Left ventricle myocardium superior (tissue), 1 donor: ENCODE measurements at regions of chr5 and their contacts with region 1.

Region 1: DNA sequence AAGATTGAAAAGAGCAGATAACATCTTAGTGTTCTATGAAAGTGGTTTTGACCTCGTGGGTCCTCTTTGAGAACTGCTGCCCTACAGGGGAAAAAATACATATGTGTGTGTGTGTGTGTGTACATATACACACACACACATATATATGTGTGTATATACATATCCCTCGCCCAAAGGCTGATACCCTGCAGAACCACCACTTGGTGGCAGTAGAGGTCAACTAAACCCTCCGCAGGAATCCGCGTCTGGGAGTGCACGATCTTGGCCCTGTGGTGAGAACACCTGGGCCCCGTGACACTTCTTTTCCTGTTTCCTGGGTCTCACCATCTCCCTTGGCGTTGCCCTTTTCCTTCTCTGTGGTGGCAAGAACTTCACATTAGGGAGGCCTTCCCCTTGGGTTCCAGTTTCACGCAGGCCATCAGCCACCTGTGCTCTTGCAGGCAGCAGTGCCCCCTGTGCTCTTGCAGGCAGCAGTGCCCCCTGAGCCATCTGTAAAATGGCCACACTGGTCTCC is 8.2 kb downstream of the IL9 start:
- DNase-seq: peak; percentile 41
- ATAC-seq: peak; percentile 87

Region 2: DNA sequence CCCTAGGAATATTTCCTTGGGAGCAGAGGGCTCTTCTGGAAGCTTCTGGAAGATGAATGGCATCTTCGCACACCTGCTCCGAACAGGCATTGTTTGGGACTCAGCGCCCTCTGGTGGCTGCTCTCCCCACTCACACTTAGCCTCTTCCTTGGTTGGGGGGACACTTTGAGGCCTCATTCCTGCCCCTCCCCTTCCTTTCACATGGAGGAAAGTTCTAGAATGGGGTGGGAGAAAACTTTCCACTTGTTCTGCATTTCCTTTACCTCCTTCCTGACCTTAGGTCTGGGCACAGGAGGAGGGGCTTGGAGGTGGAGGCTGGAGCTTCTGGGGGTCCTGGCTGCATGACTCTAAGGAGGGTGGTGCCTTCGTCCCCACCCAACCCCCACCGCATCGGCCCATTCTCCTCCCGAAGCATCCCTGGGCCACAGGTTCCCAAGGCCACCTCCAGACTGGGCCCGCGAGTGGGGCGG is 324.9 kb after region 1 on chr5:
- intact Hi-C with region 1: loop called (anchors 5 kb)
- DNase-seq: peak; percentile 73
- ATAC-seq: peak; percentile 58